Posterior cingulate gyrus (tissue), 11 donors: ENCODE measurements at regions of chr3 and their contacts with region 1.

Region 1: GRCh38 chr3:15982667-15983145 is 184.9 kb upstream of the ANKRD28 start:
- DNase-seq: peak in 8 of 10 donors; percentile 28 to 91 (median 58)

Region 2: DNA sequence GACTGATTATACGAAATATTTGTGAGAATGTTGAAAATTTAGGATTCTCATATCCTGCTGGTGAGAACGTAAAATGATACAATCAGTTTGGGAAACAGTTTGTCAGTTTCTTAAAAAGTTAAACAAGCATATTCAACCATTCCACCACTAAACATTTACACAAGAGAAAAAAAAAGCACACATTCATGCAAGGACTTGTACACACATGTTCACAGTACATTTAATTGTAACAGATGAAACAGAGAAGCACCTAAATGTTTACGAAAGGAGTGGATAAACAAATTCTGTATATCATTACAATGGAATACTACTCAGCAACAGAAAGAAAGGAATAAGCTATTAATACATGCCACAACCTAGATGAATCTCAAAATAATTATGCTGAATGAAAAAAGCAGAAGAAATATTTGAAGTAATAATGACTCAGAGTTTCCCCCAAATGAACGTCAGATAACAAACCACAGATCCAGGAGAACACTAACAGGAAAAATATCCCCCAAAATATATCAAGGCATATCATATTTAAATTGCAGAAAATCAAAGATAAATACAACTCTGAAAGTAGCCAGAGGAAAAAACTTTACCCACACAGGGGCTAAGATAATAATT is 199.2 kb before region 1 on chr3:
- intact Hi-C with region 1: no loop called
- DNase-seq: no peak

Region 3: GRCh38 chr3:15859507-15860013 is 123.1 kb before region 1 on chr3:
- intact Hi-C with region 1: loop called (anchors 5 kb)
- DNase-seq: peak; percentile 75 to 98 (median 88)

Region 4: GRCh38 chr3:15933439-15934139 is 49.1 kb before region 1 on chr3:
- intact Hi-C with region 1: loop called (anchors 5 kb)
- DNase-seq: peak in 4 of 10 donors; percentile 37 to 84 (median 48)